HEK293T (cell line): ENCODE measurements at regions of chr2 and their contacts with region 1.

Region 1: GRCh38 chr2:38750891-38751595 is at the start of gene SRSF7:
- DNase-seq: peak; percentile 96

Region 2: GRCh38 chr2:38704664-38705063 is 46.4 kb before region 1 on chr2:
- CTCF ChIA-PET with region 1: no interaction called
- POLR2A ChIA-PET with region 1: interaction called, 10 read pairs
- DNase-seq: no peak

Region 3: GRCh38 chr2:38765149-38765548 is 14.1 kb after region 1 on chr2:
- CTCF ChIA-PET with region 1: no interaction called
- POLR2A ChIA-PET with region 1: interaction called, 59 read pairs
- DNase-seq: no peak

Region 4: DNA sequence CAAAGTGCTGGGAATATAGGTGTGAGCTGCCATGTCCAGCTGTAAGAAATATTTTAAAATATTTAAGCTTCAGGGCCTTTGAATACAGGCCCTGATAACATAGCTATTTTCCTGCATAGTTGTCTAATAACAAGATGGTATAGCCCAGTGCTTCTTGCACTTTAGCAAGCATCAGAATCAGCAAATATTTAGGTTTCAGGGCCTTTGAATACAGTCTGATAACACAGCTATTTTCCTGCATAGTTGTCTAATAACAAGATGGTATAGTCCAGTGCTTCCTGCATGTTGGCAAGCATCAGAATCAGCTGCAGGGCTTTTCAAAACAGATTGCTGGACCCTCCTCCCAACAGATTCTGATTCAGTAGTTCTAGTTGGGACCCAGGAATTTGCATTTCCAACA is 32.5 kb after region 1 on chr2:
- CTCF ChIA-PET with region 1: no interaction called
- POLR2A ChIA-PET with region 1: interaction called, 11 read pairs
- DNase-seq: no peak

Region 5: GRCh38 chr2:38836791-38837190 is 85.7 kb after region 1 on chr2:
- CTCF ChIA-PET with region 1: no interaction called
- POLR2A ChIA-PET with region 1: interaction called, 10 read pairs
- DNase-seq: no peak